ENCODE measurements at regions of chr10 and their contacts with region 1.

Region 1: GRCh38 chr10:114703377-114704107 is 45.5 kb upstream of the ABLIM1 start:
- DNase-seq: peak; percentile 11
- H3K4me3 Mint-ChIP-seq: no peak overlapping the region
- H3K27ac Mint-ChIP-seq: no peak overlapping the region
- H3K4me1 Mint-ChIP-seq: no peaks in the 10 kb centered on the region
- H3K27me3 Mint-ChIP-seq: peaks cover 12% of the 10 kb centered on the region

Region 2: GRCh38 chr10:115129752-115130151 is 426.2 kb after region 1 on chr10:
- CTCF ChIA-PET with region 1: interaction called, 3 read pairs
- intact Hi-C with region 1: loop called (anchors 10 kb)
- DNase-seq: no peak
- H3K4me3 Mint-ChIP-seq: no peak overlapping the region
- H3K27ac Mint-ChIP-seq: no peak overlapping the region
- H3K4me1 Mint-ChIP-seq: no peaks in the 10 kb centered on the region
- H3K27me3 Mint-ChIP-seq: peaks cover 7% of the 10 kb centered on the region